T-cell (primary cell): ENCODE measurements at regions of chr5 and their contacts with region 1.

Region 1: GRCh38 chr5:134758504-134759341 is at the start of gene DDX46:
- DNase-seq: peak; percentile 85 to 96 (median 91)
- ATAC-seq: peak; percentile 98 to 99 (median 99)
- H3K4me3 ChIP-seq: peak within 1 kb of the TSS; percentile 85 to 92
- H3K4me3 Mint-ChIP-seq: peak within 1 kb of the TSS; percentile 99 to 100 (median 99)
- H3K27ac ChIP-seq: peak within 1 kb of the TSS; percentile 59
- H3K27ac Mint-ChIP-seq: peak within 1 kb of the TSS; percentile 97 to 98
- H3K4me1 ChIP-seq: peaks cover 12 to 18% of the 10 kb centered on the region in 2 experiments
- H3K4me1 Mint-ChIP-seq: peaks cover 37 to 47% (median 40%) of the 10 kb centered on the region in 3 donors
- H3K27me3 ChIP-seq: peaks cover 0 to 2% of the 10 kb centered on the region in 2 experiments
- H3K27me3 Mint-ChIP-seq: no peaks in the 10 kb centered on the region
- total RNA-seq, gene DDX46: 53.9 to 69.5 (median 65.7) TPM

Region 2: GRCh38 chr5:134738133-134738962 is 20.4 kb before region 1 on chr5 and contains the start of gene CAMLG:
- CTCF ChIA-PET with region 1: interaction called, 3 to 19 read pairs
- POLR2A ChIA-PET with region 1: interaction called in 1 of 2 experiments, 7 read pairs
- DNase-seq: peak; percentile 92 to 99 (median 96)
- ATAC-seq: peak; percentile 96 to 98 (median 98)
- H3K4me3 ChIP-seq: peak within 1 kb of the TSS; percentile 73 to 76
- H3K4me3 Mint-ChIP-seq: peak within 1 kb of the TSS; percentile 90 to 95 (median 91)
- H3K27ac ChIP-seq: peak within 1 kb of the TSS; percentile 86
- H3K27ac Mint-ChIP-seq: peak within 1 kb of the TSS; percentile 83 to 96
- H3K4me1 ChIP-seq: peaks cover 9 to 26% of the 10 kb centered on the region in 2 experiments
- H3K4me1 Mint-ChIP-seq: peaks cover 25 to 36% (median 29%) of the 10 kb centered on the region in 3 donors
- H3K27me3 ChIP-seq: no peaks in the 10 kb centered on the region
- H3K27me3 Mint-ChIP-seq: no peaks in the 10 kb centered on the region
- total RNA-seq, gene CAMLG: 26.7 to 34.6 (median 32.5) TPM

Region 3: GRCh38 chr5:134958765-134959168 is 200.0 kb after region 1 on chr5:
- CTCF ChIA-PET with region 1: interaction called in 1 of 2 experiments, 13 read pairs
- POLR2A ChIA-PET with region 1: no interaction called
- DNase-seq: no peak
- ATAC-seq: no peak
- H3K4me3 ChIP-seq: no peak overlapping the region
- H3K4me3 Mint-ChIP-seq: no peak overlapping the region
- H3K27ac ChIP-seq: no peak overlapping the region
- H3K27ac Mint-ChIP-seq: no peak overlapping the region
- H3K4me1 ChIP-seq: peaks cover 2 to 6% of the 10 kb centered on the region in 2 experiments
- H3K4me1 Mint-ChIP-seq: peaks cover 3 to 11% (median 9%) of the 10 kb centered on the region in 3 donors
- H3K27me3 ChIP-seq: no peaks in the 10 kb centered on the region
- H3K27me3 Mint-ChIP-seq: no peaks in the 10 kb centered on the region